CD8-positive, alpha-beta T cell (primary cell): ENCODE measurements at regions of chr1 and their contacts with region 1.

Region 1: GRCh38 chr1:151443846-151444782 is 15.2 kb downstream of the POGZ start:
- DNase-seq: peak; percentile 40 to 86 (median 66)
- ATAC-seq: peak; percentile 100
- H3K4me3 ChIP-seq: no peak overlapping the region
- H3K4me3 Mint-ChIP-seq: no peak overlapping the region
- H3K27ac ChIP-seq: no peak overlapping the region
- H3K27ac Mint-ChIP-seq: no peak overlapping the region
- H3K4me1 ChIP-seq: peaks cover 6% of the 10 kb centered on the region
- H3K4me1 Mint-ChIP-seq: peaks cover 63% of the 10 kb centered on the region
- H3K27me3 ChIP-seq: no peaks in the 10 kb centered on the region
- H3K27me3 Mint-ChIP-seq: no peaks in the 10 kb centered on the region
- CTCF ChIP-seq: peak; percentile 83

Region 2: GRCh38 chr1:151227634-151228033 is 216.5 kb before region 1 on chr1:
- CTCF ChIA-PET with region 1: no interaction called
- POLR2A ChIA-PET with region 1: no interaction called
- intact Hi-C with region 1: no loop called
- DNase-seq: no peak
- ATAC-seq: no peak
- H3K4me3 ChIP-seq: no peak overlapping the region
- H3K4me3 Mint-ChIP-seq: no peak overlapping the region
- H3K27ac ChIP-seq: no peak overlapping the region
- H3K27ac Mint-ChIP-seq: no peak overlapping the region
- H3K4me1 ChIP-seq: no peaks in the 10 kb centered on the region
- H3K4me1 Mint-ChIP-seq: no peaks in the 10 kb centered on the region
- H3K27me3 ChIP-seq: no peaks in the 10 kb centered on the region
- H3K27me3 Mint-ChIP-seq: no peaks in the 10 kb centered on the region
- CTCF ChIP-seq: no peak

Region 3: GRCh38 chr1:151510957-151511635 is 67.0 kb after region 1 on chr1 and contains the start of gene CGN:
- CTCF ChIA-PET with region 1: interaction called, 3 read pairs
- POLR2A ChIA-PET with region 1: no interaction called
- intact Hi-C with region 1: loop called in 1 of 2 experiments (anchors 5 kb)
- DNase-seq: peak; percentile 62 to 94 (median 86)
- ATAC-seq: peak; percentile 97
- H3K4me3 ChIP-seq: peak within 1 kb of the TSS; percentile 65 to 79
- H3K4me3 Mint-ChIP-seq: peak within 1 kb of the TSS; percentile 94
- H3K27ac ChIP-seq: peak within 1 kb of the TSS; percentile 42 to 48
- H3K27ac Mint-ChIP-seq: peak within 1 kb of the TSS; percentile 80
- H3K4me1 ChIP-seq: peaks cover 21% of the 10 kb centered on the region
- H3K4me1 Mint-ChIP-seq: peaks cover 28% of the 10 kb centered on the region
- H3K27me3 ChIP-seq: no peaks in the 10 kb centered on the region
- H3K27me3 Mint-ChIP-seq: no peaks in the 10 kb centered on the region
- CTCF ChIP-seq: no peak
- total RNA-seq, gene CGN: 0.28 to 0.49 TPM

Region 4: DNA sequence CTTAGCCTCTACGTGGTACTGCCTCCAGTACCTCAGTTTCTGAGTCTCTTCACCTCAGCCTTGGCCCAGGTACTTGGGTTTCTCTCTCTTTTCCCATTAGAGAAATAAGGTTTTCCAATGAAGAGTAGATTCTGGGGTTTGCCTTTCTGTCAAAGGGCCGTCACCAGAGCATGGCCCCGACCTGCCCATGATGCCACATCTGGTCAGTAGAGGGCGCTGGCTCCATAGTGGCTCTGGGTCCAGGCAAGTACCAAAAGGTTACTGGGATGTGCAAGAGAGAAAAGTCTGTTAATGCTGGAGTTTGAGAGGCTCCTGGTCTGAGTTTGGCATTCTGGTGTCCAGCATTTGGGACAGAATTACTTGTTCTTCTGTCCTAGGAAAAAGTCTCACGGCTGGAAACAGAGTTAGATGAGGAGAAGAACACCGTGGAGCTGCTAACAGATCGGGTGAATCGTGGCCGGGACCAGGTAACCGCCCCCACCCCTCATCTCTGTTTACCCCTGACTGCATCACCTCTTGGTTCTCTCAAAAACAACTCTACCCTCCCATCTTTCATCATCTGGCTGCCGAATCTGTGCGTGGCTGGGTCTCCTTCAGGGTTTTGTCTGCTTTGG is 90.7 kb after region 1 on chr1:
- CTCF ChIA-PET with region 1: interaction called, 7 read pairs
- POLR2A ChIA-PET with region 1: no interaction called
- intact Hi-C with region 1: loop called (anchors 1 to 5 kb)
- DNase-seq: peak; percentile 58 to 83 (median 75)
- ATAC-seq: peak; percentile 88
- H3K4me3 ChIP-seq: no peak overlapping the region
- H3K4me3 Mint-ChIP-seq: no peak overlapping the region
- H3K27ac ChIP-seq: no peak overlapping the region
- H3K27ac Mint-ChIP-seq: no peak overlapping the region
- H3K4me1 ChIP-seq: peaks cover 6% of the 10 kb centered on the region
- H3K4me1 Mint-ChIP-seq: peaks cover 5% of the 10 kb centered on the region
- H3K27me3 ChIP-seq: no peaks in the 10 kb centered on the region
- H3K27me3 Mint-ChIP-seq: no peaks in the 10 kb centered on the region
- CTCF ChIP-seq: peak; percentile 82

Region 5: DNA sequence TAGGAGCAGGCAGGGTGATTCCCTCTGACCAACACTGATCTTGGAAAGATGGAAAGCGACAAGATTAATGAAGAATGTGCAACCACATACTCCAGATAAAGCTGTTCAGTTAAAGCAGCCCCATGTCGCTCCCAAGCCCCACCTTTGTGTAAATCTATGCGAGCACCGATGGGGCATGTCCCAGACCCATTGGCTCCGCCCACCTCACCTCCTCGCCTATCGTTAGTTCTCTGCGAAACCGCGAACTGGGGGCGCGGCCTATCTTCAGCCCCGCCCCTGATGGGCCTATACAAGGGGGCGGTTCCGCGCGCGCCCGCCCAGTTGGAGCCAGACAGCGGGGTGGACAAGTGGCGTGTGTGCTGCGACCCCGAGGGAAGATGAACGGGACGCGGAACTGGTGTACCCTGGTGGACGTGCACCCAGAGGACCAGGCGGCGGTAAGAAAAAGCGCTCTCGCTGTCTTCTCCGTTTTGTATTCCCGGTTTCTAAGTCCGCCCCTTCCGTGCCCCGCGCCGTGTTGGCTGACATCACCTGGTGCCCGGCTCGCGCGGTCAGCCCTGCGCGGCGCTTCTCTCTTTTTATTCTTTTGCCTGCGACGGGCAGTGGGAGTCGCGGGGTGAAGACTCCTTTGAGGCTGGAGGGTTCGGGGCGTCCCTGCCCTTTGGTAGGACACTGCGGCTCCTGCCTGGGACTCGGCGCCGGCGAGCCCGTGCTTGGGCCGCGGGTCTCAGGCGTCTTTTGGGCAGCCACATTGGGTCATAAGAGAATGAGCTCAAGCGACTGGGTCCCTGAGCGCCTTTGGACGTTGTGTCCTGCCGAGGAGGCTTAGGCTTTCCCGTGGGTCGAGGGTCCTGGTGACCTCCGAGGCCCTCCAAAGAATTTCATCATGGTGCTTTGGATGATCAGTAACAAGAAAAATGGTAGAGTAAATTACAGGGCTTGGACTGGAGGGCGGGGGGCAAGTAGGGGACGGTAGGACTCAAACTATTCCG is 96.2 kb after region 1 on chr1 and contains the start of gene TUFT1:
- CTCF ChIA-PET with region 1: interaction called, 7 read pairs
- POLR2A ChIA-PET with region 1: no interaction called
- intact Hi-C with region 1: loop called in 1 of 2 experiments (anchors 2 kb)
- DNase-seq: peak; percentile 86 to 97 (median 94)
- ATAC-seq: peak; percentile 99
- H3K4me3 ChIP-seq: peak within 1 kb of the TSS; percentile 74 to 78
- H3K4me3 Mint-ChIP-seq: peak within 1 kb of the TSS; percentile 95
- H3K27ac ChIP-seq: peak within 1 kb of the TSS in 1 of 2 experiments; percentile 29
- H3K27ac Mint-ChIP-seq: peak within 1 kb of the TSS; percentile 82
- H3K4me1 ChIP-seq: peaks cover 14% of the 10 kb centered on the region
- H3K4me1 Mint-ChIP-seq: peaks cover 21% of the 10 kb centered on the region
- H3K27me3 ChIP-seq: peaks cover 4 to 16% of the 10 kb centered on the region in 2 experiments
- H3K27me3 Mint-ChIP-seq: no peaks in the 10 kb centered on the region
- CTCF ChIP-seq: no peak
- total RNA-seq, gene TUFT1: 8.5 TPM

Region 6: DNA sequence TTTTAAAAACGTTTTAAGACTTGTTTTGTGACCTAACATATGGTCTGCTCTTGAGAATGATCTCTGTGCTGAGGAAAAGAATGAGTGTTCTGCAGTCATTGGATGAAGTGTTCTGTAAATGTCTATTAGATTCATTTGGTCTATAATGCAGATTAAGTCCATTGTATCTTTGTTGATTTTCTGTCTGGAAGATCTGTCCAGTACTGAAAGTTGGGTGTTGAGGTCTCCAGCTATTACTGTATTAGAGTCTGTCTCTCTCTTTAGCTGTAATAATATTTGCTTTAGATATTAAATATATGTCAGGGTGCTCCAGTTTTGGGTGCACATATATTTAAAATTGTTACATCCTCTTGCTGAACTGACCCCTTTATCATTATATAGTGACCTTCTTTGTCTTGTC is 229.3 kb after region 1 on chr1:
- CTCF ChIA-PET with region 1: no interaction called
- POLR2A ChIA-PET with region 1: no interaction called
- intact Hi-C with region 1: loop called in 1 of 2 experiments (anchors 5 kb)
- DNase-seq: no peak
- ATAC-seq: no peak
- H3K4me3 ChIP-seq: no peak overlapping the region
- H3K4me3 Mint-ChIP-seq: no peak overlapping the region
- H3K27ac ChIP-seq: no peak overlapping the region
- H3K27ac Mint-ChIP-seq: no peak overlapping the region
- H3K4me1 ChIP-seq: no peaks in the 10 kb centered on the region
- H3K4me1 Mint-ChIP-seq: peaks cover 9% of the 10 kb centered on the region
- H3K27me3 ChIP-seq: no peaks in the 10 kb centered on the region
- H3K27me3 Mint-ChIP-seq: no peaks in the 10 kb centered on the region
- CTCF ChIP-seq: no peak

Region 7: DNA sequence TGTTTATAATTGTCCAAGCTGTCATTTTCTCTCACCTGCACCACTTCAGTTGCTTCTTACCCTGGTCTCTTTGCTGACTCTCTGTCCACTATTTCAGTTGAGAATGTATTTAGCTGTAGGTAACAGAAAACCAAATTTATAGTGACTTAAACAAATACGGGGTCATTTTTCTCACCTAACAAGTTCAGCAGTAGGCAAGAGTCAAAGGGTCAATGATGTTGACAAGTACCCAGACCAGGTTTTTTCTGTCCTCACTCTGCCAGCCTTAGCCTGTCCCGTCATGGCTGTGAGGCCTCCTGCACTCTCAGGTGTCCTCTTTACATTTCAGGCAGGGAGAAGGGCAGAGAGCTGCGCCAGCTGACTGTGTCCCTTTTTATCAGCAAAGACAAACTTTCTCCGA is 289.0 kb after region 1 on chr1:
- CTCF ChIA-PET with region 1: interaction called, 10 read pairs
- POLR2A ChIA-PET with region 1: no interaction called
- intact Hi-C with region 1: loop called (anchors 1 kb)
- DNase-seq: no peak
- ATAC-seq: no peak
- H3K4me3 ChIP-seq: no peak overlapping the region
- H3K4me3 Mint-ChIP-seq: no peak overlapping the region
- H3K27ac ChIP-seq: no peak overlapping the region
- H3K27ac Mint-ChIP-seq: no peak overlapping the region
- H3K4me1 ChIP-seq: no peaks in the 10 kb centered on the region
- H3K4me1 Mint-ChIP-seq: no peaks in the 10 kb centered on the region
- H3K27me3 ChIP-seq: peaks cover 0 to under 1% of the 10 kb centered on the region in 2 experiments
- H3K27me3 Mint-ChIP-seq: peaks cover 36% of the 10 kb centered on the region
- CTCF ChIP-seq: no peak

Region 8: DNA sequence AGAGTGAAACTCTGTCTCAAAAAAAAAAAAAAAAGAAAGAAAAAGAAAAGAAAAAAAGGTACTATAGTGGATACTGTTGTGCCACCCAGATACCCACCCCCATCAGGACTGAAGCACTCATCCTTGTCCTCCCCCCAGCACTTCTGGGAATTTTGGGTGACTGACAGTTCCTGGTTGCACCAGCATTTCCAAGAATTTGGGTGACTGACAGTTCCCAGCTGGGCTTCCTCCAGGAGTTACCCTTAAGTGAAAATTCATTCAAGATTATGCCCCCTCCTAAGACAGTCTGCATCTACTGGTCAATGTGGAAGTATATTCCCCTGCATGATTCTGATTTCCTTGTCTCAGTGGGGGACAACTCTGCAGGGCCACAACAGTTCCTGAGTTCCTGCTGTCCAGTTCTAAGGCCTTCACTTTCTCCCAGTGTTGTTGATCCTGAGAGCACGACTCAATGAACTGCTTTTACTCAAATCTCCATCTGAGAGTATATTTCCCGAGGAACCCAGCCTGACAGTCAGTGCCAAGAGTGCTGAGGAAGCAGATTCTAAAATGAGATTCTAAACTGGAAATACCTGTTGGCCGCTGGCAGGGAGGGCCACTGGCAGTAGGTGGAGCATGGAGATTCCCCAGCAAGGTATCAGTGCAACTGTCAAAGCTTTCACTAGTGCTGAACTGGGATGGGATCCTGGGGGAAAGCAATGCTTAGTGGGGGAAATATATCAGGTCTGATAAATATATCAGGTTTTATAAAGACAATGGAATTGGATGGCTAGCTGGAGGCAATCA is 295.7 kb after region 1 on chr1:
- CTCF ChIA-PET with region 1: interaction called, 10 read pairs
- POLR2A ChIA-PET with region 1: no interaction called
- intact Hi-C with region 1: loop called (anchors 1 kb)
- DNase-seq: no peak
- ATAC-seq: no peak
- H3K4me3 ChIP-seq: no peak overlapping the region
- H3K4me3 Mint-ChIP-seq: no peak overlapping the region
- H3K27ac ChIP-seq: no peak overlapping the region
- H3K27ac Mint-ChIP-seq: no peak overlapping the region
- H3K4me1 ChIP-seq: no peaks in the 10 kb centered on the region
- H3K4me1 Mint-ChIP-seq: no peaks in the 10 kb centered on the region
- H3K27me3 ChIP-seq: no peaks in the 10 kb centered on the region
- H3K27me3 Mint-ChIP-seq: peaks cover 3% of the 10 kb centered on the region
- CTCF ChIP-seq: no peak

Region 9: DNA sequence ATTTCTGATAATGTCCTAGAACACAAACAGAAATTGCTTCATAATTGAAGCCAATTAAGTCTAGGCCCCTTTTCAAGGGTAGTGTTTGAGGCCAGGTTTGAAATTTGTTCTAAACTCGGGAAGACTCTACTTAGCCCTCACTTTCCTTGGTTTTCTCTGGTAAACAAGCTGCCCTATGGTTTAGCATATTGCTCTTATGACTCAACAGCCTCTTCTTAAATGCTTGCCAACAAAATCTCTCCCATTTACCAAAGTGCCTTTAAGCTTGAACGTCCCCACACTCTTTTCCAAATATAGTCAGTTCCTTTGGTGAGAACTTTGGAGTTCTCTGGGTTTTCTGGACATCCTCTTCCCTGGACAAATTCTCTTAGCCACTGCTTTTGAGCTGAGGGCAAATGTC is 1392.8 kb after region 1 on chr1:
- CTCF ChIA-PET with region 1: no interaction called
- POLR2A ChIA-PET with region 1: no interaction called
- intact Hi-C with region 1: no loop called
- DNase-seq: no peak
- ATAC-seq: no peak
- H3K4me3 ChIP-seq: no peak overlapping the region
- H3K4me3 Mint-ChIP-seq: no peak overlapping the region
- H3K27ac ChIP-seq: no peak overlapping the region
- H3K27ac Mint-ChIP-seq: no peak overlapping the region
- H3K4me1 ChIP-seq: no peaks in the 10 kb centered on the region
- H3K4me1 Mint-ChIP-seq: no peaks in the 10 kb centered on the region
- H3K27me3 ChIP-seq: no peaks in the 10 kb centered on the region
- H3K27me3 Mint-ChIP-seq: peaks cover 11% of the 10 kb centered on the region
- CTCF ChIP-seq: no peak